Heart right ventricle (tissue), 16 donors: ENCODE measurements at regions of chr7 and their contacts with region 1.

Region 1: GRCh38 chr7:85030893-85031292 is 156.0 kb downstream of the SEMA3D start:
- DNase-seq: no peak
- ATAC-seq: no peak
- H3K4me3 ChIP-seq: no peak overlapping the region
- H3K27ac ChIP-seq: no peak overlapping the region
- H3K4me1 ChIP-seq: no peaks in the 10 kb centered on the region
- H3K27me3 ChIP-seq: peaks cover 0 to 6% (median 0%) of the 10 kb centered on the region in 7 donors
- CTCF ChIP-seq: peak in 7 of 9 donors; percentile 27 to 64 (median 52)

Region 2: DNA sequence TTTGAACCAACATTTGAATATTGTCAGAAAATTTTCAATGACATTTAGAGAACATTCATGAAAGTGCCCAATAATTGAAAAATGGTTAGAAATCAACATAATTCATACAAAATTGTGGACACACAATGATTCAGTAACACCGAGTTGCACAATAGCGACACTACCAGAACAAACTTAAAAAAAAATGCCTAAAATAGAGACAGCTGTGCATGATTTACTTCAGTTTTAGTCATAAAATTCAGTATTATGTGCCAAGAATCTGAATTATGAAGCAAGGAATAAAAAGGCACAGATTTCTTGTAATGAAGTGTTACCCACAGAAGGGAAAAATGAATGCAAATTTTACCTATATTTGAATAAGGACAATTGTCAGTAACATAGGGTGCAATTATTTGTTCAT is 240.0 kb before region 1 on chr7:
- intact Hi-C with region 1: no loop called
- DNase-seq: no peak
- ATAC-seq: no peak
- H3K4me3 ChIP-seq: no peak overlapping the region
- H3K27ac ChIP-seq: no peak overlapping the region
- H3K4me1 ChIP-seq: no peaks in the 10 kb centered on the region
- H3K27me3 ChIP-seq: no peaks in the 10 kb centered on the region
- CTCF ChIP-seq: no peak

Region 3: DNA sequence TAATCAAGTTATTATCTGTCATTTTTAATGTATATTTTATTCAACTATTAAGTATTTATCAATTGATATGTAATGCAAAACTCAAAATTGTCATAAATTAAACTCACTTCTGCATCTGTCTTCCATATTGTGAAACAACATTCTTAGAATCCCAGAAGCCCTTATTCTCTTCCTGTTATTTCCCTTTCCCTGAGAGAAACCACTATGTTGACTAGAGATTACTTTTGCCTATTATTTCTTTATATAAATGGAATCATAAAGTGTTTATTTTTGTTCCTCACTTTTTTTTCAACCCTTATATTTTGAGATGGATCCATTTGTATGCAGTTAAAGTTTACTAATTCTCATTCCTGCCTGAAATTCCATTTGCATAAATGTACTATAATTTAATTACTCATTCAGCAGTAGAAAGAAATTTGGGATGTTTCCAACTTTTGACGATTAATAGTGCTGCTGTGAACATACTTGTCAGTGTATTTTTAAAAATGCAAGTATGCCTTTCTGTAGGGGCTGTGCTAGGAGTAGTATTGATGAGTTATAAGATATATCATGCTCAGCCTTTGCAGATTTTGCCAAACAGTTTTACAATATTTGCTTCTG is 55.2 kb before region 1 on chr7:
- intact Hi-C with region 1: no loop called
- DNase-seq: no peak
- ATAC-seq: no peak
- H3K4me3 ChIP-seq: no peak overlapping the region
- H3K27ac ChIP-seq: no peak overlapping the region
- H3K4me1 ChIP-seq: peaks cover 0 to 3% (median 0%) of the 10 kb centered on the region in 9 donors
- H3K27me3 ChIP-seq: no peaks in the 10 kb centered on the region
- CTCF ChIP-seq: no peak

Region 4: GRCh38 chr7:85068799-85069198 is 37.9 kb after region 1 on chr7:
- intact Hi-C with region 1: no loop called
- DNase-seq: no peak
- ATAC-seq: peak in 6 of 8 donors; percentile 44 to 83 (median 58)
- H3K4me3 ChIP-seq: no peak overlapping the region
- H3K27ac ChIP-seq: no peak overlapping the region
- H3K4me1 ChIP-seq: peaks cover 0 to 25% (median 8%) of the 10 kb centered on the region in 9 donors
- H3K27me3 ChIP-seq: no peaks in the 10 kb centered on the region
- CTCF ChIP-seq: no peak

Region 5: DNA sequence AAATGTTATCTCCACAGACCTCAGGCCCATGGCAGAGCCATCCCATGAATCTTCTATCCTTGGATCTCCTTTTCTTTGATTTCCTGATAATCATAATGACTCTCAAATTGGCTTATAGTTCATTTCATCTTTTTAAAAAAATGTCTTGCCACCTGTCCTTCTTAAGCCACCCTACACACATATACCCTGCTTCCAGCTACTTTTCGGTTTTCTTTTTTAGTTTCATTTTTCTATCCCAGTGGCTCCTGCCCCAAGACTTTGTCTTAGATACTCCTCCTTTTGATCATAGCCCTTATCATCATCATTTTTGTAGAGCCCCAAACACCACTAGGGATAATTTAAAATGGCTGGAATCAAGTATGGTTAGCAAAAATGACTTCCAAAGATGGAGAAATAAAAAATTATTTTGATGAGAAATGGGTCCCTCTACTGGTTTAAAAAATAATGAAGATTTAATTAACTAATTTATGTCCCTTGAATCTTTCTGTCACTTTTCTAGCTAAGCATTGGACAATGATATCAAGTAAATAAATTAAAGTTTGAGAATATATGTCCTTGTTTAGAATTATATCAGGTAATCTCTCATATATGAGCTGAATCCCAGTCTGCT is 433.3 kb after region 1 on chr7:
- intact Hi-C with region 1: loop called in 2 of 10 experiments (anchors 10 kb)
- DNase-seq: no peak
- ATAC-seq: no peak
- H3K4me3 ChIP-seq: no peak overlapping the region
- H3K27ac ChIP-seq: no peak overlapping the region
- H3K4me1 ChIP-seq: no peaks in the 10 kb centered on the region
- H3K27me3 ChIP-seq: no peaks in the 10 kb centered on the region
- CTCF ChIP-seq: peak in 2 of 9 donors; percentile 6 to 13

Region 6: DNA sequence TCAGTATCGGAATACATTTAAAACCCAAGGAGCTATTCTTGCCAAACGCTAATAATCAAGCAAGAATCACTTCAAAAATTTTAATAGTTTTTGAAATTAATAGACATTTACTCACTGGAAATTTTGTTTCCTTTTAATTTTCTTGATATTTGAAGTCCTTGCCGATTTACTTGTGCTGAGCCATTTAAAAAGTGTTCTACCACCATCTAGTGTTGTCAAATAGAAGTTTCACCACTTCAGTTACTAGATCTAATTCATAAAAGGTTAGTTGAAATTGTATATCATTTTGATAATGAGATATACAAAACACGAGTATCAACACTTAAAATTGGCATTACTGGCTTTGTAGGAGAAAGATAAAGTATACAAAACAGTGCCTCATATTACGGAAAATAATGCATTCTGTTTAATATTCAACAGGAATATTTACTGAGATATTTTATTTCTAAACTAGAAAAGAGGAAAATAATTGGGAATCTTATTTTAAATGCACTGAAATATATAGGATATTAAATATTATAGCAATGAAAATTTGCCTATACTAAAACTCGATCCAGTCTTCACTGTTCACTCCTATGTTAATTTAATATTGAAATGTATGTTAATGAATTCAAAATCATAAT is 820.8 kb after region 1 on chr7:
- intact Hi-C with region 1: loop called in 2 of 10 experiments (anchors 5 to 10 kb)
- DNase-seq: no peak
- ATAC-seq: no peak
- H3K4me3 ChIP-seq: no peak overlapping the region
- H3K27ac ChIP-seq: no peak overlapping the region
- H3K4me1 ChIP-seq: no peaks in the 10 kb centered on the region
- H3K27me3 ChIP-seq: no peaks in the 10 kb centered on the region
- CTCF ChIP-seq: peak in 7 of 9 donors; percentile 21 to 49 (median 36)